ENCODE measurements at regions of chr1 and their contacts with region 1.

Region 1: GRCh38 chr1:154272217-154272998 is at the start of gene HAX1:
- DNase-seq: peak; percentile 90 to 95
- ATAC-seq: peak; percentile 91 to 96 (median 93)
- H3K4me3 ChIP-seq: peak within 1 kb of the TSS; percentile 59 to 96 (median 80)
- H3K27ac ChIP-seq: peak within 1 kb of the TSS; percentile 57 to 97 (median 90)
- H3K4me1 ChIP-seq: peaks cover 3 to 21% (median 12%) of the 10 kb centered on the region in 9 donors
- H3K27me3 ChIP-seq: no peaks in the 10 kb centered on the region
- CTCF ChIP-seq: peak; percentile 62 to 93 (median 79)
- total RNA-seq, gene HAX1: 162 to 196 (median 171) TPM

Region 2: DNA sequence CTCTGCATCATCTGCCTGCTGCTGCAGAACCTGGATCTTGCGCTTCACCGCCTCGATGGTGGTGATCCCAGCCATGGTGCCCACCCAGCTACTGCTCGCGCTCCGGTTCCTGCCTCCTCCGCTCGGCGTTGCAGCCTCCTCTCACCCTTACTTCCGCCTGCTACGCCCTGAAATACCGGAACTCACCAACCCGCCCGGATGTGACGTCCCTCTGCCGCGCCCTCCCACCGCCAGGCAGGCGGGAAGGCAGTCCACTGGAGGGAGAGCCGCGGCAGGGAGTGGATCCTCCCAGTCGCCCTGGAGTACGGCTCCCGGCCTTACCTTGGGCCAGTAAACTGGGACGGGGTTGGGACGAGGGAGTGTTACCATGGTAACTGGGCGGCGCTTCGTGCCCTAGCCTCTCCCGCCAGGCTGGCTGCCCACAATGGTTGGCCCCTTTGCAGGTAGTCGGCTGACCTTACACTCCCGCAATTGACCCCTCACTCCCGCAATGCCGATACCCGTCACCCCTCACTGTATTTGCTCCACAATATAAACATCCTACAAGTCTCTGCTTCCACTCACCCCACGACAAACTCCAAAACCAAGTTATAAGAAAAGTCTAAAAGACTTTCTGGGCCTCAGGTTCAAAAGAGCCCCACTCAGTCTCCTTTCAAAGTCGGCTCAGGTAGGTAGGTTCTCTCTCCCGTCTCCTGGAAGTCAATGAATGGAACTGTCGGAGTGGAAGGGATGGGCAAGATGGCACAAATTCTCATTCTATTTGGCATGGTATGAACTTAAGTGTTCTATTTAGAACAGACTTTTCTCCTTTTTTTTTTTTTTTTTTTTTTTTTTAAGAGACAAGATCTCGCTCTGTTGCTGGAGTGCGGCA is 89.1 kb before region 1 on chr1:
- intact Hi-C with region 1: loop called in 1 of 10 experiments (anchors 1 kb)
- DNase-seq: peak; percentile 95 to 96
- ATAC-seq: peak; percentile 96 to 98 (median 98)
- H3K4me3 ChIP-seq: peak overlapping the region; percentile 66 to 95 (median 80)
- H3K27ac ChIP-seq: peak overlapping the region; percentile 26 to 95 (median 89)
- H3K4me1 ChIP-seq: peaks cover 10 to 47% (median 44%) of the 10 kb centered on the region in 9 donors
- H3K27me3 ChIP-seq: no peaks in the 10 kb centered on the region
- CTCF ChIP-seq: peak in 4 of 9 donors; percentile 22 to 40 (median 34)

Region 3: DNA sequence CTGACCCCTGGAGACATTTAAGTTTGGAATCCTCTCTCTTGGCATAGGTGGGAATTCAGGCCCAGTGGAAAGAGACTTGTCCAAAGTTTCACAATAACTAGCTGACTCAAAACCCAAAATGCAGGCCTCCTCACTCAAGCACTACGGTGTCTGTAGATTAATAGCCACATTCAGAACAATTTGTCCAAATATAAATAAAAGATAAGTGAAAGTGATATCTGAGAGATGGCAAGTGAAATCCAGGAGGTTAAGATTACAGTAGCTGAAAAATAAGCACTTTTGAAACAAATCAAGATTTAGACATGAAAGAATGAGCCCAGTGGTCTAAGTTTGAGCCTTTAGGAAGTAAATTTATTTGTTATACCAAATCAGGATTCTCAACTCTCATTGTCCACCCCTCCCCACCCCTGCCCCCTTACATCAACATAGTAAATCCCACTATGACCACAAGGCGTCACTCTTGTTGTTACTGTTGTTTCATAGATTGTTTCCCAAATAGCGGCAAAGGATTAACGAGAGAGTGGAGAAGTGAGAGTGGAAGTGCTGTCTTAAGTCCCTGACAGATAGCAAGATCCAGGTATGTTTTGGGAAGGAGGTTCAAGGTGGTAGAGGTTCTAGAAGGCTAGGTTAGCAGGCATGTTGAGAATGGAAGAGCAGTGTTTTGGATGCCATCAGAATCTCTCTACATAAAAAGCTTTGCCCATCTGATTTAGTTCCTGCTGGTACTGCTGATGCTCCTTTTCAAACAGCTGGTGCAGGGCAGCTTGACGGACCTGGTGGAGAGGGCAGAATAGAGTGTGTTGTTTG is 73.4 kb before region 1 on chr1:
- intact Hi-C with region 1: loop called in 9 of 10 experiments (anchors 1 to 10 kb)
- DNase-seq: peak in 1 of 2 donors; percentile 61
- ATAC-seq: peak; percentile 49 to 81 (median 74)
- H3K4me3 ChIP-seq: no peak overlapping the region
- H3K27ac ChIP-seq: no peak overlapping the region
- H3K4me1 ChIP-seq: peaks cover 0 to 8% (median 4%) of the 10 kb centered on the region in 9 donors
- H3K27me3 ChIP-seq: no peaks in the 10 kb centered on the region
- CTCF ChIP-seq: peak in 8 of 9 donors; percentile 21 to 67 (median 56)

Region 4: DNA sequence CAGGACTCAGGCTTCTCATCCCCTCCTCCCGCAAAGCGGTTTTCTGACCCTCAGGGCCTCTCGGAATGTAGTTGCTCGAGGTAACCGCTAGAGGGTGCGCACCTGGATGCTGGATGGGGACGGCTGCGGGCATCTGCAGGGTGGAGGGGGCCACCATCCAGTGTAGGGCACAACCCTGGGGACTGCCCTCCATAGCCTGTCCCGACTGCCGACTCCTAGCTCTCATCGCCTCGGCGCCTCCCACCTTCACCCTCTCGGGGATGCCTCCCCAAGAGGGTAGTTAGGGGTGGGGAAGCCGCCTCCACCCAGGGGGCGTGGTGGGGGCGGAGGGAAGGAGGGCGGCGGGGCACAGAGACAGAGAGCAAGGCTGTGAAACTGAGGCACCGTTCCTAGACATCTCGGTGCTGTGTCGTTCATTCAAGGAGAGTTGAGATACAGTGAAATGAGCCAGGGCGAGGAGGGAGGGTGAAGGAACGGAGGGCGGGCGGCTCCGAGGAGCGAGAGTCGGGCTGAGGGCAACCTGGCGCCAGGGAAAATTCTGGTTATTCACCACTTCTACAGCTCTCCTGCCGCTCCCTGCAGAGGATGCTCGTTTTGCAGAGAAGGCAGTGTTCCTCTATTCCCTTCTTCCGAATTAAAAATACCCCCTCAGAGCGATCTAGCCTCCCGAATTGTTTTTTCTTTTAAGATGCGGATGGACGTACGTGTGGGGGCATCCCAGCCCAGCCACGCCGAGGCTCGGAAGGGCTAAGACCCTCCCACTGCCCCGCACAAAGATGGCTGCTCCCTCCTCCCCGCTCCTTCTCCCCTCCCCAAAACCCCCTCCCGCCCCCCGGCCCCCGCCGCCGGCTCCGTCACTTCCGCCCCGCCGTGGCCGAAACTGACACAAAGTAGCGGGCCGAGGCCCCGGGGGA is 52.5 kb after region 1 on chr1 and contains the start of gene ATP8B2:
- intact Hi-C with region 1: loop called in 3 of 10 experiments (anchors 5 kb)
- DNase-seq: peak; percentile 74 to 80
- ATAC-seq: peak; percentile 37 to 78 (median 59)
- H3K4me3 ChIP-seq: peak within 1 kb of the TSS; percentile 69 to 89 (median 78)
- H3K27ac ChIP-seq: peak within 1 kb of the TSS; percentile 53 to 94 (median 92)
- H3K4me1 ChIP-seq: peaks cover 19 to 61% (median 48%) of the 10 kb centered on the region in 9 donors
- H3K27me3 ChIP-seq: peaks cover 0 to 33% (median 0%) of the 10 kb centered on the region in 7 donors
- CTCF ChIP-seq: peak; percentile 86 to 96 (median 94)
- total RNA-seq, gene ATP8B2: 10.3 to 17.3 (median 13.3) TPM

Region 5: DNA sequence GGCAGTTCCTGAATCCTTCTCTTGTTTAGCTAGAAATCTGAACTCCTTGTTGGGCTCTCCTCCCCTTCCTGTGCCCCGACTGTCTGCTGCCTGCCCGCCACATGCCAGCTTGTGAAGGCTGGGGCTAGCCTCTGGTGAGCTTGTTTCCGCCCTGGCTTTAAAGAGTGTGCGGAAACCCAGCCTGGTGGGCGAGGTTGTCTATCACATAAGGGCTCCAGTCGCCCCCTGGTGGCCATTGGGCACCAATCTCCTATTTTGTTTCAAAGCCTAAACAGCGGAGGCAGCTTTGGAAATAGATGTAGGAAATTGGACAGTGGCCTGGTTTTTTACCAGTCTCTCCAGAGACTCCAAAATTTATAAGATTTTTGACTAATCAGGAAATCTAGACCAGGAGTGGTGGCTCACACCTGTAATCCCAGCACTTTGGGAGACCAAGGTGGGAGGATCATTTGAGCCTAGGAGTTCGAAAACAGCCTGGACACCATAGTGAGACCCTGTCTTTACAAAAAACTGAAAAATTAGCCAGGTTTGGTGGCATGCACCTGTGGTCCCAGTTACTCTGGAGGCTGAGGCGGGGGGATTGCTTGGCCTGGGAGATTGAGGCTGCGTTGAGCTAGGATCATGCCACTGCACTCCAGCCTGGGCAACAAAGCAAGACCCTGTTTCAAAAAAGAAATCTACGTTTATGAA is 62.8 kb after region 1 on chr1:
- intact Hi-C with region 1: loop called in 1 of 10 experiments (anchors 5 kb)
- DNase-seq: peak; percentile 81 to 83
- ATAC-seq: peak in 7 of 8 donors; percentile 66 to 84 (median 77)
- H3K4me3 ChIP-seq: no peak overlapping the region
- H3K27ac ChIP-seq: peak overlapping the region in 6 of 10 donors; percentile 3 to 79 (median 19)
- H3K4me1 ChIP-seq: peaks cover 0 to 53% (median 9%) of the 10 kb centered on the region in 9 donors
- H3K27me3 ChIP-seq: no peaks in the 10 kb centered on the region
- CTCF ChIP-seq: peak; percentile 74 to 93 (median 89)

Region 6: GRCh38 chr1:154453574-154454352 is 181.4 kb after region 1 on chr1:
- intact Hi-C with region 1: no loop called
- DNase-seq: no peak
- ATAC-seq: peak; percentile 53 to 84 (median 76)
- H3K4me3 ChIP-seq: no peak overlapping the region
- H3K27ac ChIP-seq: peak overlapping the region in 5 of 10 donors; percentile 10 to 77 (median 15)
- H3K4me1 ChIP-seq: peaks cover 3 to 49% (median 11%) of the 10 kb centered on the region in 9 donors
- H3K27me3 ChIP-seq: no peaks in the 10 kb centered on the region
- CTCF ChIP-seq: no peak

Measured in heart right ventricle (tissue), 16 donors.